ENCODE measurements at regions of chr18 and their contacts with region 1.

Region 1: GRCh38 chr18:23586249-23587196 is at the start of gene NPC1:
- DNase-seq: peak; percentile 96
- ATAC-seq: peak; percentile 89
- H3K4me3 ChIP-seq: peak within 1 kb of the TSS; percentile 83
- H3K27ac ChIP-seq: peak within 1 kb of the TSS; percentile 98
- H3K4me1 ChIP-seq: peaks cover 32% of the 10 kb centered on the region
- H3K27me3 ChIP-seq: no peaks in the 10 kb centered on the region
- CTCF ChIP-seq: peak; percentile 66
- total RNA-seq, gene NPC1: 85.5 and 122 TPM in 2 replicates

Region 2: DNA sequence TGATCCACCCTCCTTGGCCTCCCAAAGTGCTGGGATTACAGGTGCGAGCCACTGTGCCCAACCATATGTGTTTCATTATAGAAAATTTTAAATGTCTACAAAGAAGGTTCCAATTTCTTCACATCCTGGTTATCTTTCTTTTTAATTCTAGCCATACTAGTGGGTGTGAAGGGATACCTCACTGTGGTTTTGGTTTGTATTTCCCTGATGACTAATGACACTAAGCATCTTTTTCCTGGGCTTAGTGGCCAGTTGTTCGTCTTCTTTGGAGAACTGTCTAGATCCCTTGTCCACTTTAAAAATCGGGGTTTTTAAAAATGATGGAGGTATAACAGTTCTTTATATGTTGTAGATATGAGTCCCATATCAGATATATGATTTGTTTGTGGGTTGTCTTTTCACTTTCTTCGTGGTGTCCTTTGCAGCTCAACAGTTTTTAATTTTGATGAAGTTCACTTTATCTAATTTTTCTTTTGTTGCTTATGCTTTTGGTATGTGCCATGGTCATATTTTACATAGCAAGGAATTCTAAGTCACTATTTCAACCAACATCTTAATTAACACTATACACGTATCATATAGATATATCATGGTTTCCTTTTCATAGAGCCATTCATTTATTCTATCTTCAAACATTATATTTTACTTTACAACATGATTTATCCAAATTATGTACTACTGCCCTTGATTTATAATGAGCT is 268.4 kb before region 1 on chr18:
- CTCF ChIA-PET with region 1: no interaction called
- POLR2A ChIA-PET with region 1: no interaction called
- intact Hi-C with region 1: no loop called
- DNase-seq: peak; percentile 61
- ATAC-seq: peak; percentile 86
- H3K4me3 ChIP-seq: no peak overlapping the region
- H3K27ac ChIP-seq: no peak overlapping the region
- H3K4me1 ChIP-seq: peaks cover 21% of the 10 kb centered on the region
- H3K27me3 ChIP-seq: no peaks in the 10 kb centered on the region
- CTCF ChIP-seq: no peak

Region 3: DNA sequence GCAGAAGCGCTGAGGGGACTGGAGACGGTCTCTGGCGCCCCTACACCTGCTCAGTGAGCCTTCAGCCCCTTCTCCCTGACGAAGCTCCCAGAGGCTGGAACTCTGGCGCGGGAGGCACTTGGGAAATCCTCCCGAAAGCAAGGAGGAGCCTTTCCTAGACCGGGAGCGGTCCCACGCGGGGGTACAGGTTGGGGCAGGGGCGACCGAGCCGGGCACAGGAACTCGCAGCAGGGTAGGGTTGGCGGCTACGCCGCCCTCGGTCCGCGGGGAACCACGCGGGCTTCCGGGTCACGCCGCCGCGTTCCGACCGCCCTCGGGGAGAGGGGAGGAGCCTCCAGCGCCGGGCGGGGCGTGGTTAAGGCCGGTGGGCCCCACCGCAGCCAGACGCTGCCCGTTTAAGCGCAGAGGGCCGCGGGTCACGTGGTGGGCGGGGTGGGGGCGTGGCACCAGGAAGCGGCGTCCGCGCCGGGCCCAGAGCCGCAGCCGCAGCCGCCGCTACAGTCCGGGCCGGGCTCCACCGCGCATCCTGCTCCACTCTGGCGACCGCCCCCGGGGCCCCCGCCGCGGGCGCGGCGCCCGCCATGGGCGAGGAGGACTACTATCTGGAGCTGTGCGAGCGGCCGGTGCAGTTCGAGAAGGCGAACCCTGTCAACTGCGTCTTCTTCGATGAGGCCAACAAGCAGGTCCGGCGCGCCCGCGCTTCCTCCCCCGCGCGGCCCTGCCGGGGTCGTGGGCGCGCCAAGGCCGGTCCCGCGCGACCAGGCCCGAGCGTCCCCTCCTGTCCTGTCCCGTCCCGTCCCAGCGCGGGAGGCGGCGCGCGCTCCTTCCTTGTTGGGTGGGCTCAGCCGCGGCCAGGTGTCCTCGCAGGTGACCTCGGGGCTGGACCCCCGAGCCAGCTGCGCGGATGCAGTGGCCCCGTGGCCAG is 83.2 kb before region 1 on chr18 and contains the start of gene RMC1:
- CTCF ChIA-PET with region 1: interaction called, 3 read pairs
- POLR2A ChIA-PET with region 1: no interaction called
- intact Hi-C with region 1: loop called (anchors 5 kb)
- DNase-seq: peak; percentile 93
- ATAC-seq: peak; percentile 78
- H3K4me3 ChIP-seq: peak within 1 kb of the TSS; percentile 85
- H3K27ac ChIP-seq: peak within 1 kb of the TSS; percentile 44
- H3K4me1 ChIP-seq: peaks cover 20% of the 10 kb centered on the region; the same call in 1 of the 2 replicates
- H3K27me3 ChIP-seq: no peaks in the 10 kb centered on the region
- CTCF ChIP-seq: no peak
- total RNA-seq, gene RMC1: 23.2 and 27.6 TPM in 2 replicates

Region 4: GRCh38 chr18:23523429-23524220 is 62.9 kb before region 1 on chr18:
- CTCF ChIA-PET with region 1: no interaction called
- POLR2A ChIA-PET with region 1: interaction called, 3 read pairs
- intact Hi-C with region 1: loop called (anchors 5 kb)
- DNase-seq: peak; percentile 78
- ATAC-seq: peak; percentile 83
- H3K4me3 ChIP-seq: peak overlapping the region; percentile 29; the same call in 1 of the 2 replicates
- H3K27ac ChIP-seq: peak overlapping the region; percentile 86
- H3K4me1 ChIP-seq: peaks cover 26% of the 10 kb centered on the region
- H3K27me3 ChIP-seq: no peaks in the 10 kb centered on the region
- CTCF ChIP-seq: no peak

Region 5: GRCh38 chr18:23573626-23574431 is 12.7 kb before region 1 on chr18:
- CTCF ChIA-PET with region 1: no interaction called
- POLR2A ChIA-PET with region 1: no interaction called
- intact Hi-C with region 1: loop called (anchors 1 kb)
- DNase-seq: peak; percentile 81
- ATAC-seq: peak; percentile 98
- H3K4me3 ChIP-seq: peak overlapping the region; percentile 3; the same call in 1 of the 2 replicates
- H3K27ac ChIP-seq: peak overlapping the region; percentile 58
- H3K4me1 ChIP-seq: peaks cover 18% of the 10 kb centered on the region
- H3K27me3 ChIP-seq: no peaks in the 10 kb centered on the region
- CTCF ChIP-seq: no peak

Region 6: DNA sequence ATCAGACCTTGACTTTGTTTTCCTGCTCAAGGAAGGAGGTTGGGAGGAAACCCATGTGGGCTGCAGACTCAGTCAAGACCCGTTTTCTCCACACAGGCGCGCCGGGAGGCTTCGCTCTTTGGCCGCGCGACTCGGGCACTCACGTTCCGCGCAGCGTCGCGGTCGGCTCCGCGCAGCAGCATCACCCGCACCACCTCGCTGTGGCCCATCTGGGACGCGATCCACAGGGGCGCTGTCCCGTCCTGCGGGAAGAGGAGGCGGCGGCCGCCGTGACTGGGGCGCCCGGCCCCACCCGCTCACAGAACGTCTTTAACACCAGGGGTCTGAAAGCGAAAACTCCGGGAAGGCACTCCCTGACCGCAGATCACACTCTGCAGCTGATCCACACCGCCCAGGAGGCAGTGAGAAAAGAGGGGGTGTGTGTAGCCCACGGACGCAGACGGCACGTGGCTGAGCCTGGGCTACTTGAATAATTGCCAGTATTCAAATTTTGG is 32.9 kb after region 1 on chr18:
- CTCF ChIA-PET with region 1: no interaction called
- POLR2A ChIA-PET with region 1: no interaction called
- intact Hi-C with region 1: loop called (anchors 1 kb)
- DNase-seq: no peak
- ATAC-seq: peak; percentile 21
- H3K4me3 ChIP-seq: no peak overlapping the region
- H3K27ac ChIP-seq: no peak overlapping the region
- H3K4me1 ChIP-seq: peaks cover 4% of the 10 kb centered on the region; the same call in 1 of the 2 replicates
- H3K27me3 ChIP-seq: no peaks in the 10 kb centered on the region
- CTCF ChIP-seq: no peak

Region 7: DNA sequence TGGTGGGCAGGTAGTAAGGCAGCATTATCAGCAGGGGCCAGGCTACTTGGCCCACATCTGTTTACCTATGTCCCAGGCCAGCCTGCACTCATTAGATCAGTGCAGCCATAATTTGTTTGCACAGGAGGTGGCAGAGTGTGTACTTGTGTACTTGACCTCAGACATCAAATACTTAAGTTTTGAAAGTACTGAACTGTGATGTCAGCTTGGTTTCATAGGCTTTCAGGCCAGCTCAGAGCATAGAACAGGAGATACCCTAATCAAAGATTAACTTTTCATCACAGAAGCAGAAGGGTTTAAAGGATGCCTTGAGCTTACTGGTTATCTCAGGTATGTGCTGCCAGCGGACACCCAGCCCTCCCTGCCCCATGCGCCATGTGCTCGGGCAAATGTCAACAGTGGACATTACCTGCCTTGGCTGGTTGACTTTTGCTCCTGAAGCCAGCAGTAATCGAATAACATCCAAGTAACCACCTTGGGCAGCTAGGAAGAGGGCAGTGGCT is 43.0 kb after region 1 on chr18:
- CTCF ChIA-PET with region 1: no interaction called
- POLR2A ChIA-PET with region 1: no interaction called
- intact Hi-C with region 1: loop called (anchors 2 kb)
- DNase-seq: peak; percentile 37
- ATAC-seq: peak; percentile 28
- H3K4me3 ChIP-seq: no peak overlapping the region
- H3K27ac ChIP-seq: peak overlapping the region; percentile 98
- H3K4me1 ChIP-seq: peaks cover 49% of the 10 kb centered on the region
- H3K27me3 ChIP-seq: no peaks in the 10 kb centered on the region
- CTCF ChIP-seq: no peak

Region 8: DNA sequence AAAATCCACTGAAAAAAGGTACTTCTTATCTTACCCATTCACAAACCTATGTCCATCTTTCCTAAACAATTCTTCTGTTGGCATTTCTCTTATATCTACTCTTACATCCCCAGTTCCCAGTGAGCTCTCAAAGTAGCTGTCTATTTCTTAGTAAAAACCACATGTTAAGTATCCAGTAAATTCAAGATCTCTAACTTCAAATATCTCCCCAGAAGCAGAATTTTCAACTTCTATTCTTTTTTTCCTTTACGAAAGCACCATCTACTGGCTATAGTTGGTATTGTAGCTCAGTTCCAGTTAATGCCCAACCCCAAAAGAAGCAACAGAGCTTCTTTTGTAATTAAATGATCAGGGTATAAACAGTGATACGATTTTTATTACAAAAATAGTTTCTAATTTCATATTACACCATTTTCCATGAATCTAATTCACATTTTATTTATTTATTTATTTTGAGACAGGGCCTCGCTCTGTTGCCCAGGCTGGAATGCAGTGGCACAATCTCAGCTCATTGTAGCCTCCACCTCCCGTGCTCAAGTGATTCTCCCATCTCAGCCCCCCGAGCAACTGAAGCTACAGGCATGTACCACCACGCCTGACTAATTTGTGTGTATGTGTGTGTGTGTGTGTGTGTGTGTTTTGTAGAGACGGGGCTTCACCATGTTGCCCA is 902.4 kb after region 1 on chr18:
- CTCF ChIA-PET with region 1: no interaction called
- POLR2A ChIA-PET with region 1: interaction called, 11 read pairs
- intact Hi-C with region 1: no loop called
- DNase-seq: peak; percentile 74
- ATAC-seq: 0 out of 2 replicates have a peak, but pooled peaks have one; percentile 24
- H3K4me3 ChIP-seq: no peak overlapping the region
- H3K27ac ChIP-seq: no peak overlapping the region
- H3K4me1 ChIP-seq: peaks cover 3% of the 10 kb centered on the region; the same call in 1 of the 2 replicates
- H3K27me3 ChIP-seq: peaks cover 10% of the 10 kb centered on the region
- CTCF ChIP-seq: peak; percentile 84

Measured in PC-3 (cell line).